ENCODE measurements at regions of chr12 and their contacts with region 1.

Region 1: GRCh38 chr12:55636116-55636655 is 506 bp upstream of the OR10P1 start:
- DNase-seq: no peak
- ATAC-seq: no peak
- H3K4me3 Mint-ChIP-seq: no peak overlapping the region
- H3K27ac Mint-ChIP-seq: no peak overlapping the region
- H3K4me1 Mint-ChIP-seq: peaks cover 7% of the 10 kb centered on the region
- H3K27me3 Mint-ChIP-seq: peaks cover 5% of the 10 kb centered on the region

Region 2: GRCh38 chr12:55654511-55655214 is 18.5 kb after region 1 on chr12:
- CTCF ChIA-PET with region 1: interaction called, 18 read pairs
- POLR2A ChIA-PET with region 1: no interaction called
- DNase-seq: no peak
- ATAC-seq: no peak
- H3K4me3 Mint-ChIP-seq: no peak overlapping the region
- H3K27ac Mint-ChIP-seq: no peak overlapping the region
- H3K4me1 Mint-ChIP-seq: peaks cover 2% of the 10 kb centered on the region
- H3K27me3 Mint-ChIP-seq: peaks cover 6% of the 10 kb centered on the region

Measured in activated CD8-positive, alpha-beta T cell treated with anti-CD3 and anti-CD28 coated beads, Interleukin-2, amount 10 ng/mL, durations not matched to agents 7 days and 5 days (primary cell).